ENCODE measurements at regions of chr1 and their contacts with region 1.

Region 1: GRCh38 chr1:21294266-21294989 is 4.2 kb upstream of the ECE1 start:
- DNase-seq: peak; percentile 79
- ATAC-seq: peak; percentile 67
- H3K4me3 Mint-ChIP-seq: peak overlapping the region; percentile 90
- H3K27ac Mint-ChIP-seq: peak overlapping the region; percentile 98
- H3K4me1 Mint-ChIP-seq: peaks cover 89% of the 10 kb centered on the region
- H3K27me3 Mint-ChIP-seq: no peaks in the 10 kb centered on the region
- CTCF ChIP-seq: no peak

Region 2: GRCh38 chr1:21176586-21177555 is 117.6 kb before region 1 on chr1 and contains the start of gene EIF4G3:
- CTCF ChIA-PET with region 1: no interaction called
- POLR2A ChIA-PET with region 1: no interaction called
- intact Hi-C with region 1: loop called (anchors 5 kb)
- DNase-seq: peak; percentile 99
- ATAC-seq: peak; percentile 96
- H3K4me3 Mint-ChIP-seq: peak within 1 kb of the TSS; percentile 91
- H3K27ac Mint-ChIP-seq: peak within 1 kb of the TSS; percentile 92
- H3K4me1 Mint-ChIP-seq: peaks cover 24% of the 10 kb centered on the region
- H3K27me3 Mint-ChIP-seq: no peaks in the 10 kb centered on the region
- CTCF ChIP-seq: no peak
- total RNA-seq, gene EIF4G3: 68.4 and 81.3 TPM in 2 replicates

Region 3: GRCh38 chr1:21270086-21270689 is 24.2 kb before region 1 on chr1:
- CTCF ChIA-PET with region 1: interaction called, 51 read pairs
- POLR2A ChIA-PET with region 1: interaction called, 62 read pairs
- intact Hi-C with region 1: loop called (anchors 1 kb)
- DNase-seq: peak; percentile 77
- ATAC-seq: peak; percentile 95
- H3K4me3 Mint-ChIP-seq: no peak overlapping the region
- H3K27ac Mint-ChIP-seq: peak overlapping the region; percentile 5
- H3K4me1 Mint-ChIP-seq: peaks cover 15% of the 10 kb centered on the region
- H3K27me3 Mint-ChIP-seq: no peaks in the 10 kb centered on the region
- CTCF ChIP-seq: no peak

Region 4: DNA sequence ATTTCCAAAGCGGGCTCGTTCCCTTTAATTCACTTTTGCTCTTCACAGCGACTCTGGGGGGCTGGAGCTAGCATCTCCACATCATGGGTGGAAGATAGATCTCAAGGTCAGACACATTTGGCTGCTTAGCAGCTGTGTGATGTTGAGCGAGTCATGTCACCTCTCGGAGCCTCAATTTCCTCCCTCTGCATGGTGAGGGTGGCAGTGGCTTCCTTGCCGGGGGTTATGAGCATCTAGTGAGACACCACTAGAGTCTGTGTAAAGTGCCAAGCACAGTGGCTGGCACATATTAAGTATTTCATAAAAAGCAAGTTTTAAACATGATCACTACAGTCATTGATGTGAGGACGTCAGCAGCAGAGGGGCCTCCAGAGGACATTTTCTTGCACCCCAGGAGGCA is 12.8 kb after region 1 on chr1:
- CTCF ChIA-PET with region 1: no interaction called
- POLR2A ChIA-PET with region 1: interaction called, 12 read pairs
- intact Hi-C with region 1: no loop called
- DNase-seq: no peak
- ATAC-seq: no peak
- H3K4me3 Mint-ChIP-seq: no peak overlapping the region
- H3K27ac Mint-ChIP-seq: no peak overlapping the region
- H3K4me1 Mint-ChIP-seq: peaks cover 61% of the 10 kb centered on the region
- H3K27me3 Mint-ChIP-seq: no peaks in the 10 kb centered on the region
- CTCF ChIP-seq: no peak

Region 5: GRCh38 chr1:21334214-21335087 is 40.0 kb after region 1 on chr1:
- CTCF ChIA-PET with region 1: interaction called, 11 read pairs
- POLR2A ChIA-PET with region 1: interaction called, 129 read pairs
- intact Hi-C with region 1: loop called (anchors 1 kb)
- DNase-seq: peak; percentile 67
- ATAC-seq: peak; percentile 83
- H3K4me3 Mint-ChIP-seq: peak overlapping the region; percentile 87
- H3K27ac Mint-ChIP-seq: peak overlapping the region; percentile 94
- H3K4me1 Mint-ChIP-seq: peaks cover 89% of the 10 kb centered on the region
- H3K27me3 Mint-ChIP-seq: no peaks in the 10 kb centered on the region
- CTCF ChIP-seq: no peak

Region 6: GRCh38 chr1:21517161-21517589 is 222.7 kb after region 1 on chr1:
- CTCF ChIA-PET with region 1: interaction called, 4 read pairs
- POLR2A ChIA-PET with region 1: interaction called, 37 read pairs
- intact Hi-C with region 1: loop called (anchors 2 kb)
- DNase-seq: no peak
- ATAC-seq: peak; percentile 6
- H3K4me3 Mint-ChIP-seq: peak overlapping the region; percentile 39
- H3K27ac Mint-ChIP-seq: peak overlapping the region; percentile 96
- H3K4me1 Mint-ChIP-seq: peaks cover 82% of the 10 kb centered on the region
- H3K27me3 Mint-ChIP-seq: no peaks in the 10 kb centered on the region
- CTCF ChIP-seq: no peak

Region 7: GRCh38 chr1:21782868-21783678 is 488.6 kb after region 1 on chr1 and contains the start of gene USP48:
- CTCF ChIA-PET with region 1: no interaction called
- POLR2A ChIA-PET with region 1: interaction called, 5 read pairs
- intact Hi-C with region 1: loop called (anchors 5 kb)
- DNase-seq: peak; percentile 97
- ATAC-seq: peak; percentile 78
- H3K4me3 Mint-ChIP-seq: peak within 1 kb of the TSS; percentile 90
- H3K27ac Mint-ChIP-seq: peak within 1 kb of the TSS; percentile 100
- H3K4me1 Mint-ChIP-seq: peaks cover 30% of the 10 kb centered on the region
- H3K27me3 Mint-ChIP-seq: no peaks in the 10 kb centered on the region
- CTCF ChIP-seq: no peak
- total RNA-seq, gene USP48: 86.3 and 97.3 TPM in 2 replicates